ENCODE measurements at regions of chr17 and their contacts with region 1.

Region 1: DNA sequence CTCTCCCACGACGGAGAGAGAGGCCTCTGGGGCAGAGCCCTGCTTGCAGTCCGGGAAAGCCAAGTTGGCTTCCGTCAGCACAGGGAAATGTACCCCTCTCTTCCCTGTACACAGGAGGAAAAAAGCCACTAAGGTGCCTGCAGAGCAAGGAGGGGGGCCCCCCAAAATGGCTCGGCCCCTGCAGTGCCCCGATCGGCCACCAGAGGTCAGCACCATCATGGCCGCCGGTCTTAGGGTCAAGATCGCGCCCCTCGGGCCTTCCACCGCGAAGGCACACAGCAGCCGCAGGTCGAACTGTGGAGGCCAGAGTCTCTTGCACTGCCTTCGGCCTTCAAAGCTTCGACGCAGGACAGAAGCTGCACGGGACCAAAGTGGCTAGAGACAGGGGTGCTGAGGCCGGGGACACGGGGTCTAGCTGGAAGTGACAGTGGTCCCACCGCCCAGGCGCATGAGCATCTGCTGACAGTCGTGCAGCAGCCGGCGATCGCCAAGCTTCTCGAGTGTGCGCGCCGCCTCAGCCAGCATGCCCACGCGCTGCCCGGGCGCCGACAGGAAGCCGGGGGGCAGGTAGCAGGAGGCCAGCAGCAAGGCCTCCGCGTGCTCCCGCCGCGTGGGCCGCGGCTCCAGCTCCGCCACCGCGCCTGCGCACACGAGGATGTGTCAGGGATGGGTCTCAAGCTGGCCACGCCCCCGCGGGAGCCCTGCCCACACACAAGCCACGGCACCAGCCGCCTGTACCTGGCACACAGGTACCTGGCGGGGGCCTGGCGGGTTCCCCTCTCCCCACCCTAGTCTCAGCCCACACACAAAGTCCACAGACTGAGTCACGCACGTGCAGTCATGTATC is 24.4 kb downstream of the SREBF1 start:
- DNase-seq: no peak
- H3K4me3 ChIP-seq: no peak overlapping the region
- H3K27me3 ChIP-seq: no peaks in the 10 kb centered on the region
- CTCF ChIP-seq: peak; percentile 98

Region 2: GRCh38 chr17:17561408-17562145 is 250.9 kb before region 1 on chr17:
- CTCF ChIA-PET with region 1: no interaction called
- POLR2A ChIA-PET with region 1: no interaction called
- DNase-seq: no peak
- H3K4me3 ChIP-seq: no peak overlapping the region
- H3K27me3 ChIP-seq: no peaks in the 10 kb centered on the region
- CTCF ChIP-seq: no peak

Region 3: GRCh38 chr17:17823433-17824118 is 11.1 kb after region 1 on chr17:
- CTCF ChIA-PET with region 1: interaction called, 13 read pairs
- POLR2A ChIA-PET with region 1: no interaction called
- DNase-seq: no peak
- H3K4me3 ChIP-seq: peak overlapping the region; percentile 45
- H3K27me3 ChIP-seq: no peaks in the 10 kb centered on the region
- CTCF ChIP-seq: no peak

Region 4: GRCh38 chr17:17836250-17836817 is 23.9 kb after region 1 on chr17:
- CTCF ChIA-PET with region 1: interaction called, 35 read pairs
- POLR2A ChIA-PET with region 1: no interaction called
- DNase-seq: peak; percentile 58
- H3K4me3 ChIP-seq: peak overlapping the region; percentile 90
- H3K27me3 ChIP-seq: no peaks in the 10 kb centered on the region
- CTCF ChIP-seq: no peak

Region 5: DNA sequence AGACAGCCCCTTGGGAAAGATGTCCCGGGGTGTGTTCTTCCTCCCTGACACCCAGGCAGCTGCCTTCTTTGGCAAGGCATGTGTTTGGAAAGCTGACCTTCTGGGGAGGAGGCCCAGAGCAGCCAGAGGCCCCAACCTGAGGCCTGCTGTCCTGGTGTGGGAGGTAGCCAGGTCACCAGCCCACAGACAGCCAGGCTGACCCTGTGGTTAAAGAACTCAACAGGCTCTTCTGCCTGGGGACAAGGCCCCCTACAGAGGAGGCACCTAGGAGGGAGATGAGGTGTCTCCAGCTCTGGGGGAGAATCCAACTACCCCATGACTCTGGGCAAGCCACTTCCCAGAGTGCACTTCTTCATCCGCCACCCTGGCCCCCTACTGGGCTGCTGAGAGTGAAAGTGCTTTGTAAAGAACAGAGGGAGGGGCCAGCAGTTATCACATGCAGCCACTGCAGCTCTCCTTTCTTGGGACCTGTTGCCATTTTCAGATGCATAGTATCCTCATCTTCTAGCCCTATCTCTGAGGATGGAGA is 37.5 kb after region 1 on chr17:
- CTCF ChIA-PET with region 1: interaction called, 10 read pairs
- POLR2A ChIA-PET with region 1: no interaction called
- DNase-seq: no peak
- H3K4me3 ChIP-seq: no peak overlapping the region
- H3K27me3 ChIP-seq: no peaks in the 10 kb centered on the region
- CTCF ChIP-seq: peak; percentile 40

Region 6: GRCh38 chr17:17859909-17860765 is 47.7 kb after region 1 on chr17:
- CTCF ChIA-PET with region 1: interaction called, 78 read pairs
- POLR2A ChIA-PET with region 1: no interaction called
- DNase-seq: no peak
- H3K4me3 ChIP-seq: no peak overlapping the region
- H3K27me3 ChIP-seq: no peaks in the 10 kb centered on the region
- CTCF ChIP-seq: peak; percentile 96

Region 7: GRCh38 chr17:18033442-18034099 is 221.1 kb after region 1 on chr17:
- CTCF ChIA-PET with region 1: interaction called, 10 read pairs
- POLR2A ChIA-PET with region 1: no interaction called
- DNase-seq: no peak
- H3K4me3 ChIP-seq: no peak overlapping the region
- H3K27me3 ChIP-seq: no peaks in the 10 kb centered on the region
- CTCF ChIP-seq: peak; percentile 52